ENCODE measurements at regions of chr4 and their contacts with region 1.

Region 1: GRCh38 chr4:38759113-38759789 is 23.5 kb downstream of the TLR10 start:
- DNase-seq: peak; percentile 45
- H3K4me3 Mint-ChIP-seq: no peak overlapping the region
- H3K27ac Mint-ChIP-seq: no peak overlapping the region
- H3K4me1 Mint-ChIP-seq: no peaks in the 10 kb centered on the region
- H3K27me3 Mint-ChIP-seq: no peaks in the 10 kb centered on the region
- CTCF ChIP-seq: peak; percentile 50

Region 2: GRCh38 chr4:38334810-38335537 is 424.3 kb before region 1 on chr4:
- CTCF ChIA-PET with region 1: no interaction called
- intact Hi-C with region 1: no loop called
- DNase-seq: no peak
- H3K4me3 Mint-ChIP-seq: no peak overlapping the region
- H3K27ac Mint-ChIP-seq: peak overlapping the region; percentile 47
- H3K4me1 Mint-ChIP-seq: peaks cover 10% of the 10 kb centered on the region
- H3K27me3 Mint-ChIP-seq: no peaks in the 10 kb centered on the region
- CTCF ChIP-seq: no peak

Region 3: GRCh38 chr4:38782452-38783108 is 23.3 kb after region 1 on chr4 and contains the start of gene TLR10:
- CTCF ChIA-PET with region 1: interaction called, 13 read pairs
- intact Hi-C with region 1: no loop called
- DNase-seq: peak; percentile 36
- H3K4me3 Mint-ChIP-seq: no peak within 1 kb of the TSS
- H3K27ac Mint-ChIP-seq: no peak within 1 kb of the TSS
- H3K4me1 Mint-ChIP-seq: peaks cover 2% of the 10 kb centered on the region
- H3K27me3 Mint-ChIP-seq: no peaks in the 10 kb centered on the region
- CTCF ChIP-seq: peak; percentile 40
- total RNA-seq, gene TLR10: not detected in 2 replicates

Region 4: GRCh38 chr4:38804654-38805295 is 45.5 kb after region 1 on chr4 and contains the start of gene TLR1:
- CTCF ChIA-PET with region 1: interaction called, 6 read pairs
- intact Hi-C with region 1: loop called (anchors 2 kb)
- DNase-seq: no peak
- H3K4me3 Mint-ChIP-seq: peak within 1 kb of the TSS; percentile 16
- H3K27ac Mint-ChIP-seq: no peak within 1 kb of the TSS
- H3K4me1 Mint-ChIP-seq: no peaks in the 10 kb centered on the region
- H3K27me3 Mint-ChIP-seq: no peaks in the 10 kb centered on the region
- CTCF ChIP-seq: peak; percentile 15
- total RNA-seq, gene TLR1: 1.1 and 1.3 TPM in 2 replicates

Region 5: GRCh38 chr4:38856524-38857337 is 97.5 kb after region 1 on chr4 and contains the start of gene TLR6:
- CTCF ChIA-PET with region 1: interaction called, 4 read pairs
- intact Hi-C with region 1: loop called (anchors 1 kb)
- DNase-seq: peak; percentile 62
- H3K4me3 Mint-ChIP-seq: peak within 1 kb of the TSS; percentile 11
- H3K27ac Mint-ChIP-seq: peak within 1 kb of the TSS; percentile 81
- H3K4me1 Mint-ChIP-seq: peaks cover 27% of the 10 kb centered on the region
- H3K27me3 Mint-ChIP-seq: no peaks in the 10 kb centered on the region
- CTCF ChIP-seq: no peak
- total RNA-seq, gene TLR6: 0.68 and 0.73 TPM in 2 replicates

Measured in Calu3 (cell line).